HEK293 (cell line): ENCODE measurements at regions of chr19 and their contacts with region 1.

Region 1: DNA sequence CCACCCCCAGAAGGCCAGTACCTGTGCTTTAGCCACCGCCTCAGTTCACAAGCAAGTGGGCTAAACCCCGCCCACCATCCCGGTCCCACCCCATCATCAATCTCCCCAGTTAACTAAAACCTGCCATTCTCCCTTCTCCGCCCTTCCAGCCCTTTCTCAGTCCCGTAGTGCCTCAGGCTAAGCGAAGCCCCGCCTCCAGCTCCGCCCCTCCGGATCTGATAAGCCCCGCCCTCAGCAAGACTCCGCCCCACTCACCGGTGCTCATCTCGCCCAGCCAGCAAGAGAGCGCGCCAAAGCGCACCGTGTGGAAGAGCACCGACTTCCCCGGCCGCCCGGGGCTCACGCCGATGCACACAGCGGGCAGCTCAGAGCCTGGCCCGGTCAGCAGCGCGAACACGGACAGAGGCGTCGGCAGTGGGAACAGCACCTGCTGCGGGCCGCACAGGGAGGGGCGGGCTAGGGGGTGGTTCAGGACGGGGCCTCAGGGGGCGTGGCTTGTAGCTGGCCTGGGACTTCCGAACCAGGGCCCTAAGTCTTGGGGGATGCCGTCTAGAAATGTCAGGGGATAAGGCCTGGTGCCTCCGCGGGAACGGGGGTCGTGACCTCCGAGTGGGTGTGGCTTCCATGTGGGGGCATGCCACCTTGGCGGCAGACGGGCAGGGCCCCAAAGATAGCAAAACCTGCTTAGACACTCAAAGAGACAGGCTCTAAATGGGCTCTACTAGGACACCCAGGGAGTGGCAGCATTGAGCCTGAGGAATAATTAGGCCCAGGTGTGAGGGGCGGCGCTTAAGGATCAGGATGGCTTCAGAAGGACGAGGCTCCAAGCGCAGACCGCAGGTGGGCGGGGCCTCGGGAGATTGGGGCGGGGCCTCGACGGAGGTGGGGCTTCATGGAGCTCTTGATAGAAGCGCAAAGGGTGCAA is 21.4 kb downstream of the MAP4K1 start:
- H3K4me3 ChIP-seq: peak overlapping the region; percentile 42
- H3K27ac ChIP-seq: peak overlapping the region; percentile 49; the same call in 1 of the 2 replicates
- H3K4me1 ChIP-seq: peaks cover 12% of the 10 kb centered on the region
- CTCF ChIP-seq: peak; percentile 50; the same call in 1 of the 2 replicates

Region 2: DNA sequence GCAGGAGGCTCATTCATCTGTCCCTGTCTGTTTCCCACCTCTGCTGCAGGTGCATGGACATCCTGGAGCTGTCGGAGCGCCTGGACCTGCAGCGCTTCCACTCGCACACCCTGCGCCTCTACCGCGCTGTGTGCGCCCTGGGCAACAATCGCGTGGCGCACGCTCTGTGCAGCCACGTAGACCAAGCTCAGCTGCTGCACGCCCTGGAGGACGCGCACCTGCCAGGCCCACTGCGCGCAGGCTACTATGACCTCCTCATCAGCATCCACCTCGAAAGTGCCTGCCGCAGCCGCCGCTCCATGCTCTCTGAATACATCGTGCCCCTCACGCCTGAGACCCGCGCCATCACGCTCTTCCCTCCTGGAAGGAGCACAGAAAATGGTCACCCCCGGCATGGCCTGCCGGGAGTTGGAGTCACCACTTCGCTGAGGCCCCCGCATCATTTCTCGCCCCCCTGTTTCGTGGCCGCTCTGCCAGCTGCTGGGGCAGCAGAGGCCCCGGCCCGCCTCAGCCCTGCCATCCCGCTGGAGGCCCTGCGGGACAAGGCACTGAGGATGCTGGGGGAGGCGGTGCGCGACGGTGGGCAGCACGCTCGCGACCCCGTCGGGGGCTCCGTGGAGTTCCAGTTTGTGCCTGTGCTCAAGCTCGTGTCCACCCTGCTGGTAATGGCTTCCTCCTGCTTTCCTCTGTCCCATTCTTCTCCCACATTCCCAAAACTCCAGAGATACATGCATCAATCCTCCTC is 110.6 kb before region 1 on chr19:
- CTCF ChIA-PET with region 1: no interaction called
- POLR2A ChIA-PET with region 1: no interaction called
- H3K4me3 ChIP-seq: no peak overlapping the region
- H3K27ac ChIP-seq: no peak overlapping the region
- H3K4me1 ChIP-seq: no peaks in the 10 kb centered on the region
- CTCF ChIP-seq: no peak

Region 3: GRCh38 chr19:38583219-38583984 is 12.9 kb before region 1 on chr19:
- CTCF ChIA-PET with region 1: interaction called, 7 read pairs
- POLR2A ChIA-PET with region 1: interaction called, 20 read pairs
- H3K4me3 ChIP-seq: no peak overlapping the region
- H3K27ac ChIP-seq: no peak overlapping the region
- H3K4me1 ChIP-seq: no peaks in the 10 kb centered on the region
- CTCF ChIP-seq: no peak

Region 4: DNA sequence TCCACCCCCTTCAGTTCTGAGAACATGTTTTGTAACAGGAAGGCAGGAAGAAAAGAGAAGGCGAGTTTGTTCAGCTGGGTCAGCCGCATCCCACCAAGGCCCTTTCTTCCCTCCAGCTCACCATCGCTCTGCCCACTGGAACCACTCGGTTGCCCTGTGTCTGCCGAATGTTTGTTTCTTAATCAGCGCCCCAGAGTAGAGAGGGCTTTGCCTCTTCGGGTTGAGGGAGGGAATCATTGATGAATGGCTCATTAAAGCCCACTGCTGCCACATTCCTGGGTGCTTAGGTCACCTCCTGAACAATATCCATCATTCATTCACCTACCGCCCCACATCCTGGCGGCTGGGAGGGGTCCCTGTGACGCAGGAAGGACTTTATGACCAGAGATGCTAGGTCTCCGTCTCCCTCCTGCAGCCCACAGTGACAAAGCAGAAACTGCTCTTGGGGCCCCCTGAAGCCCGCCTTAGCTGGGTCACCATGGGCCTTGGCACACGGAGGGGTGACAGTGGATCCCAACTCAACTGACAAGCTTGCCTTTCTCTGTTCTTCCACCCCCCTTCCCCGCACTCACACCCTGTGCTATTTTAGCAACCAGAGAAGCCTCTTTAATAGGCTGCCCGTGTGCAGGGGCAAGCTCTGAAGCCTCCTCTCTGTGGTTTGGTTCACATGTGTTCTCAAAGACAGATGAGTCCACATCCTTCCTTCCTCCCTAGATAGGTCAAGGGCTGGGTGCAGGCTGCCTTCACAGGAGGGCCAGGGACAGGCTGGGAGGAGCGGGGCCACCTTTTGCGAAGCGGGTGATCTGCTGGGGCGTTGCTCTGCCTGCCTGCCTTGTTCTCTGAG is 97.3 kb after region 1 on chr19:
- CTCF ChIA-PET with region 1: no interaction called
- POLR2A ChIA-PET with region 1: no interaction called
- H3K4me3 ChIP-seq: no peak overlapping the region
- H3K27ac ChIP-seq: no peak overlapping the region
- H3K4me1 ChIP-seq: peaks cover 6% of the 10 kb centered on the region; the same call in 1 of the 2 replicates
- CTCF ChIP-seq: no peak

Region 5: GRCh38 chr19:38718747-38719543 is 122.6 kb after region 1 on chr19:
- CTCF ChIA-PET with region 1: no interaction called
- POLR2A ChIA-PET with region 1: no interaction called
- H3K4me3 ChIP-seq: no peak overlapping the region
- H3K27ac ChIP-seq: 0 out of 2 replicates have a peak overlapping the region, but pooled peaks have one; percentile 2
- H3K4me1 ChIP-seq: no peaks in the 10 kb centered on the region
- CTCF ChIP-seq: peak; percentile 67; the same call in 1 of the 2 replicates